ENCODE measurements at regions of chr12 and their contacts with region 1.

Region 1: GRCh38 chr12:121793838-121794533 is 498 bp upstream of the RHOF start:
- DNase-seq: peak; percentile 95
- H3K4me3 Mint-ChIP-seq: peak overlapping the region; percentile 85
- H3K27ac Mint-ChIP-seq: peak overlapping the region; percentile 88
- H3K4me1 Mint-ChIP-seq: peaks cover 60% of the 10 kb centered on the region
- H3K27me3 Mint-ChIP-seq: no peaks in the 10 kb centered on the region

Region 2: GRCh38 chr12:121712461-121713256 is 81.3 kb before region 1 on chr12 and contains the start of gene TMEM120B:
- CTCF ChIA-PET with region 1: interaction called, 34 read pairs
- POLR2A ChIA-PET with region 1: no interaction called
- DNase-seq: peak; percentile 82
- H3K4me3 Mint-ChIP-seq: peak within 1 kb of the TSS; percentile 86
- H3K27ac Mint-ChIP-seq: peak within 1 kb of the TSS; percentile 93
- H3K4me1 Mint-ChIP-seq: peaks cover 23% of the 10 kb centered on the region
- H3K27me3 Mint-ChIP-seq: peaks cover 1% of the 10 kb centered on the region
- total RNA-seq, gene TMEM120B: 5.8 to 6.0 TPM

Region 3: GRCh38 chr12:121811434-121812319 is 17.7 kb after region 1 on chr12:
- CTCF ChIA-PET with region 1: interaction called, 1,058 read pairs
- POLR2A ChIA-PET with region 1: interaction called, 21 read pairs
- DNase-seq: peak; percentile 60
- H3K4me3 Mint-ChIP-seq: peak overlapping the region; percentile 78
- H3K27ac Mint-ChIP-seq: peak overlapping the region; percentile 78
- H3K4me1 Mint-ChIP-seq: peaks cover 57% of the 10 kb centered on the region
- H3K27me3 Mint-ChIP-seq: no peaks in the 10 kb centered on the region

Region 4: GRCh38 chr12:121839106-121839992 is 45.4 kb after region 1 on chr12:
- CTCF ChIA-PET with region 1: interaction called, 32 read pairs
- POLR2A ChIA-PET with region 1: no interaction called
- DNase-seq: peak; percentile 99
- H3K4me3 Mint-ChIP-seq: peak overlapping the region; percentile 97
- H3K27ac Mint-ChIP-seq: peak overlapping the region; percentile 93
- H3K4me1 Mint-ChIP-seq: peaks cover 18% of the 10 kb centered on the region
- H3K27me3 Mint-ChIP-seq: no peaks in the 10 kb centered on the region

Region 5: DNA sequence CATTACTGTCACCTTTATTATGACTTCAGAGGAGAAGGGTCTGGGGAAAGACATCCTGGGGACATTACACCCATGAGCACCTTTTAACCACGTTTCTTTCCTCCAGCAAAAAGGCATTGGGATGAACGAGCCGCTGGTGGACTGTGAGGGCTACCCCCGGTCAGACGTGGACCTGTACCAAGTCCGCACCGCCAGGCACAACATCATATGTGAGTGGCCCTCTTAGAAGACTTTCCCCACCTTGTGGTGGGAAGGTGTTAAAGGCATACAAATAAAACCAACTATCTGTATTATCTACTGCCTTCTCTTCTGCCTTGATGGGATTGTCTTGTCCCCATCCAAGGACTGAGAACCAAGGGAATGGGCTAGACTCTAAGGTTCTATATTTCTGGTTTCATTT is 100.6 kb after region 1 on chr12:
- CTCF ChIA-PET with region 1: interaction called, 40 read pairs
- POLR2A ChIA-PET with region 1: no interaction called
- DNase-seq: peak; percentile 22
- H3K4me3 Mint-ChIP-seq: no peak overlapping the region
- H3K27ac Mint-ChIP-seq: peak overlapping the region; percentile 80
- H3K4me1 Mint-ChIP-seq: peaks cover 41% of the 10 kb centered on the region
- H3K27me3 Mint-ChIP-seq: no peaks in the 10 kb centered on the region

Measured in activated CD4-positive, alpha-beta T cell treated with anti-CD3 and anti-CD28 coated beads, Interleukin-2, amount 10 ng/mL, durations not matched to agents 7 days and 5 days (primary cell).